Transverse colon (tissue), 4 donors: ENCODE measurements at regions of chr11 and their contacts with region 1.

Region 1: DNA sequence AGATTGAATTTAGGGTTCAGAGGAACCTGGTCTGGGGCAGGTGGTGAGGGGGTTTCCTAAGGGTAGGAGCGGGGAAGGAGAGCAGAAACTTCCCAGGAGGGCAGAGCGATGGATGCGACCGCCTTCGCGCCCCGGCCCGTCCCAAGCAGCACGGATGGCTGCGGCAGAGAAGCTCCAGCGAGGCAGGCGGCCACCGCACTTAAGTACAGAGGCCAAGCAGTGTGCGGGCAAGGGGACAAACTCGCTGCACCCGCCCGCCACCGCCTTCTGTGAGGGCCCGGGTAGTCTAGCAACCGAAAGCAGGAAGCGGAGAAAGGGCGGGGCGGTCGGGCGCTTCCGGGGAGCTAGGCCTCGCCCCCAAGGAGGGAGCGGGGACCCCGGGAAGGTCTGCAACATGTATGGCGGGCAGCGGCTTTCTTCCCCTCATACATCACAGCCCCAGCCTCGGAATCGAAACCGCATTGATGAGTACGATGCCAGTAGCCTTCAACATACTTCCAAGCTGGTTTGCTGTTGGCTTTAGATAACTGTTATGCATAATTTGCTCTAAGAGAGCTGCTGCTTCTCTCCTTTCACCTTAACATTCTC is at the start of gene AGBL2:
- DNase-seq: peak; percentile 89
- H3K4me3 ChIP-seq: peak within 1 kb of the TSS; percentile 64 to 91 (median 78)
- H3K27ac ChIP-seq: peak within 1 kb of the TSS; percentile 82 to 92 (median 85)
- H3K4me1 ChIP-seq: peaks cover 0 to 8% (median 5%) of the 10 kb centered on the region in 4 donors
- H3K27me3 ChIP-seq: no peaks in the 10 kb centered on the region
- CTCF ChIP-seq: no peak
- EP300 ChIP-seq: no peak
- POLR2A ChIP-seq: peak; percentile 79
- total RNA-seq, gene AGBL2: 3.3 to 13.5 (median 8.0) TPM

Region 2: DNA sequence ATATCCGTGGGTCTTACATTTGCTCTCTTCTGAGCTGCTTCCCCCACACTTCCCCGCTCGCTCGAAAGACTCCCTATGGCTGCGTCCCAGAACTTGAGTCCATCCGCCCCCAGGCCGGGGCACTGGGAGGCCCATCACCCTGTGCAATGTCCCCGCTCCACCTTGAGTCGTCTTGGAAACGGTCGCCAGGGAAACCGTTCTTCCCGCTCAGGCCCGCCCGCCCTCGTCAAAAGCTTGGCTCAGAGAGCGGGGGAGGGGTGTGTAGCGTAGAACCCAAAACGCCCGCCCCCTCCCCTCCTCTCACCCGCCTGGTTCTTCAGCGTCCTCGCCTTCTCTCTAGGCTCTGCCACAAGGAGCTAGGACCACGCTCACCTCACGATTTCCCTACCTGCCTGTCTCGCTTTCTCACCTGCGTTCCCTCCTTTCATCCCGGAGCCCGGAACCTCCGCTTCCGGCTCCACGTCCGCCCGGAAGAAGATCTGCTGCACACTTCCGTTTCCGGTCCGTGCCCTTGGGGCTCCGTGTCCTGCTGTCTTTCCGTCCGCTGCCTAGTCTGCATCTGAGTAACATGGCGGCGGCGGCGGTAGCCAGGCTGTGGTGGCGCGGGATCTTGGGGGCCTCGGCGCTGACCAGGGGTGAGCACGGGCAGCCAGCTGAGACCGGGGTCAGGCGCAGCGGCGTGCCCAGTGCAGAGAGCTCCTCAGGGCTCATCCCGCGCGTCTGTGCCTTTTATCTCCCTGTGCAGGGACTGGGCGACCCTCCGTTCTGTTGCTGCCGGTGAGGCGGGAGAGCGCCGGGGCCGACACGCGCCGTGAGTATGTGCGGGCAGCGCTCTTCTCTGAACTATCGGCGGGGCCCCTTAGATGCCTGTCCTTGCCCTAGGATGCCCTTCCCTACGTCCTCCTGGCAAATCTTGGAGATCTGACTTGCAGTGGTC is 136.4 kb before region 1 on chr11 and contains the starts of genes KBTBD4 and NDUFS3:
- in situ Hi-C with region 1: no loop called
- intact Hi-C with region 1: loop called (anchors 5 kb)
- DNase-seq: peak; percentile 90
- H3K4me3 ChIP-seq: peak within 1 kb of the TSS; percentile 72 to 97 (median 87)
- H3K27ac ChIP-seq: peak within 1 kb of the TSS; percentile 86 to 91 (median 89)
- H3K4me1 ChIP-seq: peaks cover 16 to 26% (median 23%) of the 10 kb centered on the region in 4 donors
- H3K27me3 ChIP-seq: no peaks in the 10 kb centered on the region
- CTCF ChIP-seq: peak in 1 of 5 experiments; percentile 8
- EP300 ChIP-seq: no peak
- POLR2A ChIP-seq: peak; percentile 79
- total RNA-seq, gene KBTBD4: 9.4 to 20.3 (median 16.5) TPM
- total RNA-seq, gene NDUFS3: 72.6 to 256 (median 213) TPM

Region 3: DNA sequence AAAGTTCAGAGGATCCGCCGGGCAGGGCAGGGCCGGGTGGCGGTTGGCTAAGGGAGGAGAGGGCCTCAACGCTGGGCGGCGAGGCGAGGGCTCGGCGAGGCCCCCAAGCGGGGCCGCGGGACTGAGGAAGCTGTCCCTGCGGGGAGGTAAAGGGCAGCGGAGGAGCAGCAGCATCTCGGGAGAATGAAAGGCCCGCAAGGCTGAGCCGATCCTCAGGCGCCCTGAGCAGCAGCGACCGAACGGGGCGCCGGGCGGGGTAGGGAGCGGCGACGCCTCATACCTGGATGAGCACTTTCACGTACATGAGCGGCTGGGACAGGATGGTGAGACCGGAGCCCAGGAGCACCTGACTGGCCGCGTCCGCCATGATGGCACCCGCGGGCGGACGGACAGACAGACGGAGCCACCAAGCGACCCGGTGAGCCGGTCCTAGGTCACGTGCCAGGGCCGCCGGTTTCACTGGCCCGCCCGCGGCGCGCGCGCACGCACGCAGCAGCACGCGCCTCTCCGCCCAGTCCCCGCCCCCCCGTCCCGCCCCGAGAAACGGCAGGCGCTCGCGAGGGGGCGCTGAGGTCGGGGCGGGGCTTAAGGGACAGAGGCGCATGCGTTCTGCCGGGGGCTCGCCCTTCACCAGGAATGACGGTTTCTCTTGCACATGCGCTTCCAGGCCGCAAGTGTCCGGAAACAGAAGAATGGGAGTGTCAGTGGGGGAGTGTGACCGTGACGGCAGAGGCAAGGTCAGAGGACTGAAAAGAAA is 72.9 kb before region 1 on chr11 and contains the start of gene MTCH2:
- in situ Hi-C with region 1: loop called in 1 of 4 experiments (anchors 10 kb)
- intact Hi-C with region 1: no loop called
- DNase-seq: peak; percentile 97
- H3K4me3 ChIP-seq: peak within 1 kb of the TSS; percentile 64 to 81 (median 76)
- H3K27ac ChIP-seq: peak within 1 kb of the TSS; percentile 93 to 98 (median 95)
- H3K4me1 ChIP-seq: peaks cover 8 to 21% (median 15%) of the 10 kb centered on the region in 4 donors
- H3K27me3 ChIP-seq: no peaks in the 10 kb centered on the region
- CTCF ChIP-seq: peak in 4 of 5 experiments; percentile 24 to 57 (median 46)
- EP300 ChIP-seq: peak; percentile 2
- POLR2A ChIP-seq: peak; percentile 83
- total RNA-seq, gene MTCH2: 21.5 to 92.2 (median 61.0) TPM